ENCODE measurements at regions of chr1 and their contacts with region 1.

Region 1: DNA sequence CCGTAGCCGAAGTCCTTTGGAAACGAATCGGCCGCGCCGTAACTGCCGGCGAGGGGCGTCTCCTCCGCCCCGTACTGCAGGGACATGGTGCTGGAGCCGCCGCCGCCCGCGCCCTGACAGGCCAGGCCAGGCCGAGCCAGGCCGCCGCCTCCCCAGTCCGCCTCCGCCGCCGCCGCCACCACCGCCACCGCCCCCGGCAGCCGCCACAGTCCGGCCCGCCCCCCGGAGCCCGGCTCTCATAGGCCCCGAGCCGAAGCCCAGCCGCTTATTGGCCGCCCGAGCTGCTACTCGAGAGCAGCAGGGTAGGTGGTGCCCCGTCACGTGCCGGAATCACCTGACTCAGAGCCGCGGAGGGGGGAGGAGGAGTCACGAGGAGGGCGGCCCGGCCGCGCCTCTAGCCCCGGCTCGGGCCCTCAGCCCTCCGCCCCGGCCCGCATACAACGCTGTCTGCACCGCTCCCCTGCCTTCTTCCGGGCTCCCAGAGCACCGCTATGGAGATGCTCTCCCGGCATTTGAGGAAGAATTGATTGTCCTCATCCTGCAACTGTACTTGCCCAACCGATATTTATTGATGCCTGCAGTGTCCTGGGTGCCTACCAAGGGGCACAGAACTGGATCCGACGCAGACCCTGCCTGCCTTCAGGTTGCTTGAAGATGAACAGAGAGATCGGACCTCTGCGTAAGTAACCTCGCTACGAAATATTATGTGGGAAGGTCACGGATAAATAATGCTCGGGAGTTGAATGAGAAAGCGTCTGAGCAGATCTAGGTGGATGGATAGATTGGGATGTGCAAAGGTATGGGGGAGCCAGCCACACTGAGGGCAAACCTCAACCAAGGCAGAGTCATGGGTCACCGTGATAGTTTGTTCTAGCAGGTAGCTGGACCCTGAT is at the start of gene RRAGC:
- DNase-seq: peak; percentile 100
- ATAC-seq: peak; percentile 99
- H3K4me3 ChIP-seq: peak within 1 kb of the TSS; percentile 90
- H3K27ac ChIP-seq: peak within 1 kb of the TSS; percentile 87
- H3K4me1 ChIP-seq: peaks cover 8% of the 10 kb centered on the region
- H3K27me3 ChIP-seq: no peaks in the 10 kb centered on the region
- total RNA-seq, gene RRAGC: 16.2 to 21.8 (median 18.7) TPM

Region 2: DNA sequence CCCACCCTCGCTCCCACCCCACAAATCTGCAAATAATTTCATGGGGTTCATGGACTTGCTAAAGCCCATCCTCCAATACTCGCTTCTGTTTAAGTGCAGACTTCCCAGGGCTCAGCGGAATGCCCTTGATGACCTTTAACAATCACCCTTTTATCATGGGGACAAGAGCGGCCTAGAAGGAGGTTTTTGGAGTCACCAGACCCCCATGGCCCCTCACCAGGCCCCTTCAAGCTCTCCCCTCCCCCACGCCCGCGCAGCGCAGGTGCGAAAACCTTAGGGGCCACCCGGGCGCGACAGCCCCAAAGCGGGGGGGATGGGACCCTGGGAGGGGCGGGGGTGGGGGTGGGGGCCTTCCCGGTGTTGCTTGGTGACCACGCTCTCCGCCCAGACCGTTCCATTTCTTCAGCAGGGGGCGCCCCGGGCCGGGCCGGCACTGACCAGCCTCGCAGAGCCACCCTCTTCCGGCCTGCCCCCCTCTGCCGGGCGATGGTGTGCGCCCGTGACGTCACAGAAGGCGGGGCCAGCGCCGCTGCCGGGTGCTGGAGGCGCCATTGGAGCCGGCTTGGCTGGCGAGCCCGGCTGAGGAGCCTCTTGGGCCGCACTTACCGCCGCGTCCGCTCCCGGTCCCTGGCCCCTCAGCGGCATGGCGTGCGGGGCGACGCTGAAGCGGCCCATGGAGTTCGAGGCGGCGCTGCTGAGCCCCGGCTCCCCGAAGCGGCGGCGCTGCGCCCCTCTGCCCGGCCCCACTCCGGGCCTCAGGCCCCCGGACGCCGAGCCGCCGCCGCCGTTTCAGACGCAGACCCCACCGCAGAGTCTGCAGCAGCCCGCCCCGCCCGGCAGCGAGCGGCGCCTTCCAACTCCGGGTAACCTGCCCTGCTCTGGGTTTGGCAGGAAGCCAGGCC is 131.2 kb after region 1 on chr1 and contains the start of gene AKIRIN1:
- intact Hi-C with region 1: loop called in 2 of 4 experiments (anchors 10 kb)
- DNase-seq: peak; percentile 98 to 100 (median 99)
- ATAC-seq: peak; percentile 98 to 99
- H3K4me3 ChIP-seq: peak within 1 kb of the TSS; percentile 99
- H3K27ac ChIP-seq: peak within 1 kb of the TSS; percentile 98
- H3K4me1 ChIP-seq: peaks cover 6% of the 10 kb centered on the region
- H3K27me3 ChIP-seq: no peaks in the 10 kb centered on the region
- total RNA-seq, gene AKIRIN1: 44.6 to 63.3 (median 56.0) TPM

Region 3: GRCh38 chr1:39258146-39258924 is 398.5 kb after region 1 on chr1:
- intact Hi-C with region 1: no loop called
- DNase-seq: peak; percentile 50 to 83 (median 71)
- ATAC-seq: peak; percentile 77 to 83
- H3K4me3 ChIP-seq: no peak overlapping the region
- H3K27ac ChIP-seq: peak overlapping the region; percentile 64
- H3K4me1 ChIP-seq: no peaks in the 10 kb centered on the region
- H3K27me3 ChIP-seq: no peaks in the 10 kb centered on the region